ENCODE measurements at regions of chr10 and their contacts with region 1.

Region 1: DNA sequence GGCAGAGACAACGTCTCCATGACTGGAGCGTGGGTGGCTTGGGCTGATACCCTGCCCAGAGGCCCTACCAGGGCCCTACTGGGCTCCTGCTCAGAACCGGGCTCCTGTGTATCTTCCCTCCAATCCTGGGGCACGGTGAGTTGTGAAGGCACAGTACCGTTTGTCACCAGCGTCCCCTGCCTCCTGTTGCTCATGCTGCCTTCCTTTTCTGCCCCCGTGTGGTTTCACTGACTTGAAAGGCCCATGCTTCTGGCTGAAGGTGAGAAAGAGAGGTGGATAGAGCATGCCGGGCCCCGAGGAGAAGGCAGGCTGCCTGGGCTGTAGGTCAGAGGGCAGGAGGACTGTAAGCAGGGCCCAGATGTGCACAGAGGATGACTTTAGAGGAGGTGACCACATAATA is 9.1 kb upstream of the DMBT1 start:
- DNase-seq: no peak
- H3K4me3 ChIP-seq: no peak overlapping the region
- H3K27ac ChIP-seq: peak overlapping the region; percentile 33 to 48
- H3K4me1 ChIP-seq: no peaks in the 10 kb centered on the region
- H3K27me3 ChIP-seq: no peaks in the 10 kb centered on the region
- CTCF ChIP-seq: no peak
- POLR2A ChIP-seq: no peak

Region 2: GRCh38 chr10:122669842-122670241 is 118.4 kb after region 1 on chr10:
- intact Hi-C with region 1: no loop called
- DNase-seq: no peak
- H3K4me3 ChIP-seq: no peak overlapping the region
- H3K27ac ChIP-seq: no peak overlapping the region
- H3K4me1 ChIP-seq: no peaks in the 10 kb centered on the region
- H3K27me3 ChIP-seq: no peaks in the 10 kb centered on the region
- CTCF ChIP-seq: no peak
- POLR2A ChIP-seq: no peak

Region 3: DNA sequence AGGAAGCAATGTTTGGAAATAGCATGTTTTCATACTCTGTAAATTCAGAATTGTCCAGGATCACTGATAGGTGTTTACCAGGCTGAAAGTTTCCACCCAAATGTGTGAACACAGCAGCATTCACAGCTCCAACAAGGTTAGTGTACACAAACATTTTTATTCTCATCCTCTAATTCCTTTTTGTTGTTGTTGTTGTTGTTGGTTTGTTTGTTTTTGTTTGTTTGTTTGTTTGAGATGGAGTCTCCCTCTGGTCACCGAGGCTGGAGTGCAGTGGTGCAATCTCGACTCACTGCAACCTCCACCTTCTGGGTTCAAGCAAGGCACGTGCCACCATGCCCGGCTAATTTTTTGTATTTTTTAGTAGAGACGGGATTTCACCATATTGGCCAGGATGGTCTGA is 1179.7 kb after region 1 on chr10:
- intact Hi-C with region 1: loop called (anchors 10 kb)
- DNase-seq: no peak
- H3K4me3 ChIP-seq: no peak overlapping the region
- H3K27ac ChIP-seq: no peak overlapping the region
- H3K4me1 ChIP-seq: no peaks in the 10 kb centered on the region
- H3K27me3 ChIP-seq: no peaks in the 10 kb centered on the region
- CTCF ChIP-seq: no peak
- POLR2A ChIP-seq: no peak

Measured in breast epithelium (tissue), 4 donors.